Activated CD4-positive, alpha-beta memory T cell treated with anti-CD3 and anti-CD28 coated beads for 36 hours (primary cell): ENCODE measurements at regions of chr17 and their contacts with region 1.

Region 1: DNA sequence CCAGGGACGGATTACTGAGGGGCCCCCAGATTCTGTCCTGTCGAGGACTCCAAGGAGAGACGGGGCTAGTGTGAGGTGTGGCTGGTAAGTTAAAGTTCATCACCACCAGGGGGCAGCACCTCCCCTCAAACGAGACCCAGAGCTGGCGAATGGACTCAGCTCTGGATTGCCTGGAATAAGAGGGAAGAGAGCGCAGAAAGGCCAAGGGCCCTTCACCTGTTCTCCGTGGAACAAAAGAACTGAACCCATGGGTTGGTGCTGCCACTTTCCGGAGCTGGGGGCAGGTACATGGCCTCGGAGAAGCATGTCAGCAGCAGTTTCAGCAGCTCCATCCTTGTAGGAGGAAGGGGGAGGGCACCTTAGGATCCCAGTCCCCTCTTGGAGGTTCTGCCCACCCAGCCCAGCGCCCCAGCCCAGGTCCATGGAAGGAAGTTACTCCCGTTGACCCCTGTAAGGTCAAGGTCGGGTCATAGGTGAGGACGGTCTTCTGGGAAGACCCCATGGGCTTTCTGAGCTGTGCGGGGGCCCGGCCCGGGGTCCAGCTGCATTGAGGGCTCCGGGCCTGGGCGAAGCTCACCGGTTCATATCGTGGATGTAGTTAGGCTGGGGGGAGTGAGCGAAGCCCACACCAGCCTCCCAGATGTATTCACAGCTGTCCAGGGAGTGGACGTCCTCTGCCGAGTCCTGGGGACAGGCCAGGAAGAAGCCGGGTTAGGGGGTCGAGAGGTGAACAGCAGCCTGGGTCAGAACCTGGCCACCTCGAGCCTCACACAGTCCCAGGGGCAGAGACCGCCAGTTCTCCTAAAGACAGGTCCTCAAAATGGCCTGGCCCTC is 10.7 kb downstream of the HID1 start:
- DNase-seq: peak; percentile 90
- H3K4me3 Mint-ChIP-seq: no peak overlapping the region
- H3K27ac Mint-ChIP-seq: no peak overlapping the region
- H3K4me1 Mint-ChIP-seq: peaks cover 9% of the 10 kb centered on the region
- H3K27me3 Mint-ChIP-seq: no peaks in the 10 kb centered on the region

Region 2: DNA sequence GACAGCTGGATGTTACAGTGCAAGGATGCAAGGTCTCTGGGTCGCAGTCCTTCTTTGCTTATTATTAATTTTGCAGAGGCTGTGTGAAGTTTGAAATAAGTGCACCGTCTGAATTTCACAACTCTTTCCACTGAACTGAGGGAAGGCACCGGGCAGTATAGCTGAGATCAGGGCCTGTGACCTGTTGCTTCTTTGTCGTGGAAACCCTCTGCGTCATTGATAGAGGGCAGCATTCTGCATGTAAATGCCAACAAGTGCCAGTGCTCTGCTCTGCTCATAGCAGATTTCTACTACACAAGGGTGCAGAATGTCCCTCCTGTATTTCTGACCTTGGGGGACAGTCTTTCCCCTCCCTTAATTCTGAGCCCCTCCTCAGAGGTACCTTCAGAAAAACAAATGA is 275.1 kb before region 1 on chr17:
- CTCF ChIA-PET with region 1: no interaction called
- POLR2A ChIA-PET with region 1: no interaction called
- intact Hi-C with region 1: no loop called
- DNase-seq: no peak
- H3K4me3 Mint-ChIP-seq: no peak overlapping the region
- H3K27ac Mint-ChIP-seq: no peak overlapping the region
- H3K4me1 Mint-ChIP-seq: peaks cover 4% of the 10 kb centered on the region
- H3K27me3 Mint-ChIP-seq: peaks cover 8% of the 10 kb centered on the region

Region 3: DNA sequence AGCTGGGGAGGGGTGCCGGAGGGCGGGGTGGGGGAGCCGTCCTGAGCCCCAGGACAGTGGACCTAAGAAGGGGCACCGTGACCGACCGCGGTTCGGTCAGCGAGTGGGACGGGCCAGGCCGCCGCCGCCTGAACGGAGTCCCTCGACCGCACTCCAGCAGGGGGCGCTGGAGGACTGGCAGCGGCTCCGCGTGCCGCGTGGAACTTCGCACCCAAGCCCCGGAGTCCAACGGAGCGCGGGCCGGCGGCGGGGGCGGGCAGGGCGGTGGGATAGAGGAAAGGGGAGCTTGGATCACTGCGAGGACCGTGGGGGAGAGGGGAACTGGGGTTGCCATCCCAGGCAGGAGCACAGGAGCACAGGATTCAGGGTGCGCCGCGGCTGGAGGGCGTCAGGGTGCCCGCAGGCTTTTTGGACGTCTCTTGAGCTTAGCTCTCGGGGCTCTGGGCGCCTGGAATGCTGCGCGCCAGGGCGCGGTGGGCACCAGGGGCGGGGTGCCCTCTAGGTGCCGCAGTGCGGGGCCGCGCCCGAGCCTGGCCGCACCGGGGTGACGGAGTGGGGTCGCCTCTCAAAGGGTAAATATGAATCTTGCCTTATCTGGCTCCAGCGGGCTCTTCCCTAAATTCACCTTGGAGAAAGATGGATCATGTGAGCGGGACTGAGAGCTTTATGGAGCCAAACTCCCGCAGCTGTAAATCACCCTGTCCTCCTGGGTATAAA is 38.2 kb before region 1 on chr17:
- CTCF ChIA-PET with region 1: interaction called, 195 read pairs
- POLR2A ChIA-PET with region 1: no interaction called
- intact Hi-C with region 1: loop called (anchors 1 kb)
- DNase-seq: peak; percentile 78
- H3K4me3 Mint-ChIP-seq: no peak overlapping the region
- H3K27ac Mint-ChIP-seq: no peak overlapping the region
- H3K4me1 Mint-ChIP-seq: peaks cover 6% of the 10 kb centered on the region
- H3K27me3 Mint-ChIP-seq: peaks cover 48% of the 10 kb centered on the region

Region 4: DNA sequence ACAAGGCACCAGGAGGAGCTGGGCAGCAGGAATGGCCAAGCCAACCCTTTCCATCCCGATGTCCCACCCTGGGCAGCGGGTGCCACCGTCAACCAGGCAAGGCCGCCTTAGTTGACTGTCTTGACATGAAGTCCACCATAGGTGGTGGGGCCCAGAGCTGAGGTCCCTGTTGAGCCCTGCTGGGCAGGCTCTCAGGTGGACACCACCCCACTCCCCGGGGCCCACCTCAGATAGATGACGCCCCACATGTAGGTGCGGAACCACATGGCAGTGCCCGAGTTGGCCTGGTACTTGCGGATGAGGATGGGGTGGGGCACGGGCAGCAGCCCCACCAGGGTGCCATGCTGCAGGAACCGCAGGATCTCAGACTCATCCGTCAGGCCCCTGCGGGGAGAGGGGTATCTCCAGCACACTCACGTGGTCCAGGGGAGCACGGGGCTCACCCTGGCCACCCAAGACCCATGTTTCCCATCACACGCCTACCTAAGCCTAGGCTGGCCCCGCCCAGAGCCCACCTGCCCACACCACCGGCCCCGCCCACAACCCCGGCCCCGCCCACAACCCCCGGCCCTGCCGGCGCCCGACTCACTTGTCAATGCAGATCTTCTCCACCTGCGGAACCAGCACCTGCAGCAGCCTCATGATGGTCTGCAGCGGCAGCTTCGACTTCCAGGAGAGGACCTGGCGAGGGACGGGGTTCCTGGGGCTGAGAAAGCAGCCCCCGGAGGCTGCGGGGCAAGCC is 10.0 kb before region 1 on chr17:
- CTCF ChIA-PET with region 1: interaction called, 21 read pairs
- POLR2A ChIA-PET with region 1: no interaction called
- intact Hi-C with region 1: no loop called
- DNase-seq: no peak
- H3K4me3 Mint-ChIP-seq: no peak overlapping the region
- H3K27ac Mint-ChIP-seq: no peak overlapping the region
- H3K4me1 Mint-ChIP-seq: no peaks in the 10 kb centered on the region
- H3K27me3 Mint-ChIP-seq: no peaks in the 10 kb centered on the region

Region 5: DNA sequence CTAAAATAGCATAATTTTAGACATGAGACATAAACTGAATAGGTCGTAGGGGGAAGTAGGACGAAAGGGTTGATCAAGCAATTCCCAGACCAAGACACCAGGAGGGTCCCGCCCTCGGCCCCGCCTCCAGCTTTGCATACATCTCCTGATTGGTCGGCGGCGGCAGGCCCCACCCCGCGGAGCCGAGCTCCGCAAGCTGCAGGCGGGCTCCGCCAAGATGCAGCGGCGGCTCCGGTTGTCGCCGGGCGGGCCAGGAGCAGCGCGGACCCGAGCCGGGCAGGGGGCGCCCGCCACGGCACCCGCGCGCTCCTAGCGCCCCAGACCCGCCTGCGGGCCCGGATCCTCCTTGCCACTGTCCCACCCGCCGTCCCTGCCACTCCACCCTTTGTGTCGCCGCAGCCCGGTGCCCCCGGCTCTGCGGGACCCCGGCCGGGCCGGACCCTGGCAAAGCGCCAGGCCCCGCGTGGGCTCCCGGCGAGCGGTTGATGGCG is 25.6 kb after region 1 on chr17 and contains the start of gene CDR2L:
- CTCF ChIA-PET with region 1: interaction called, 39 read pairs
- POLR2A ChIA-PET with region 1: interaction called, 4 read pairs
- intact Hi-C with region 1: no loop called
- DNase-seq: peak; percentile 95
- H3K4me3 Mint-ChIP-seq: peak within 1 kb of the TSS; percentile 73
- H3K27ac Mint-ChIP-seq: no peak within 1 kb of the TSS
- H3K4me1 Mint-ChIP-seq: peaks cover 6% of the 10 kb centered on the region
- H3K27me3 Mint-ChIP-seq: peaks cover 4% of the 10 kb centered on the region
- total RNA-seq, gene CDR2L: 1.1 to 1.3 TPM

Region 6: GRCh38 chr17:75024686-75025397 is 63.0 kb after region 1 on chr17:
- CTCF ChIA-PET with region 1: interaction called, 15 read pairs
- POLR2A ChIA-PET with region 1: no interaction called
- intact Hi-C with region 1: no loop called
- DNase-seq: peak; percentile 58
- H3K4me3 Mint-ChIP-seq: peak overlapping the region; percentile 20
- H3K27ac Mint-ChIP-seq: no peak overlapping the region
- H3K4me1 Mint-ChIP-seq: peaks cover 12% of the 10 kb centered on the region
- H3K27me3 Mint-ChIP-seq: no peaks in the 10 kb centered on the region

Region 7: DNA sequence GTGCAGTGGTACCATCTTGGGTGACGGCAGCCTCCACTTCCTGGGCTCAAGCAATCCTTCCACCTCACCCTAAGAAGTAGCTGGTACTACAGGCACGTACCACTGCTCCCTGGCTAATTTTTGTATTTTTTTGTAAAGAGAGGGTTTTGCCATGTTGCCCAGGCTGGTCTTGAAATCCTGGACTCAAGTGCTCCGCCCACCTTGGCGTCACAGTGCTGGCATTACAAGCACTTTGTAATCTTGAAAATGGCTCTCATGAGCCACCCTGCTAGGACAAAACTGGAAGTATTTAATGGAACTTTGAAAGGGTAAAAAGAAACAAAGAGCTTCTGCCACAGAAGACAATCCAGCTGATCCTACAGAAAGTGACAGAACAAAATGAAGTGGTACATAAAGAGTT is 211.7 kb after region 1 on chr17:
- CTCF ChIA-PET with region 1: interaction called, 18 read pairs
- POLR2A ChIA-PET with region 1: no interaction called
- intact Hi-C with region 1: no loop called
- DNase-seq: no peak
- H3K4me3 Mint-ChIP-seq: no peak overlapping the region
- H3K27ac Mint-ChIP-seq: peak overlapping the region; percentile 39
- H3K4me1 Mint-ChIP-seq: peaks cover 15% of the 10 kb centered on the region
- H3K27me3 Mint-ChIP-seq: no peaks in the 10 kb centered on the region

Region 8: GRCh38 chr17:75205037-75205792 is 243.3 kb after region 1 on chr17 and contains the start of gene NUP85:
- CTCF ChIA-PET with region 1: interaction called, 60 read pairs
- POLR2A ChIA-PET with region 1: no interaction called
- intact Hi-C with region 1: loop called (anchors 1 kb)
- DNase-seq: peak; percentile 95
- H3K4me3 Mint-ChIP-seq: peak within 1 kb of the TSS; percentile 81
- H3K27ac Mint-ChIP-seq: peak within 1 kb of the TSS; percentile 89
- H3K4me1 Mint-ChIP-seq: peaks cover 18% of the 10 kb centered on the region
- H3K27me3 Mint-ChIP-seq: no peaks in the 10 kb centered on the region
- total RNA-seq, gene NUP85: 125 to 132 TPM